HepG2 (cell line): ENCODE measurements at regions of chr9 and their contacts with region 1.

Region 1: GRCh38 chr9:101235105-101235866 is 149.5 kb downstream of the BAAT start:
- DNase-seq: peak; percentile 45
- ATAC-seq: peak; percentile 81
- H3K4me3 ChIP-seq: no peak overlapping the region
- H3K27ac ChIP-seq: no peak overlapping the region
- H3K4me1 ChIP-seq: peaks cover 30% of the 10 kb centered on the region
- H3K27me3 ChIP-seq: no peaks in the 10 kb centered on the region
- CTCF ChIP-seq: peak; percentile 68
- EP300 ChIP-seq: no peak
- POLR2A ChIP-seq: no peak
- RAD21 ChIP-seq: peak; percentile 47

Region 2: DNA sequence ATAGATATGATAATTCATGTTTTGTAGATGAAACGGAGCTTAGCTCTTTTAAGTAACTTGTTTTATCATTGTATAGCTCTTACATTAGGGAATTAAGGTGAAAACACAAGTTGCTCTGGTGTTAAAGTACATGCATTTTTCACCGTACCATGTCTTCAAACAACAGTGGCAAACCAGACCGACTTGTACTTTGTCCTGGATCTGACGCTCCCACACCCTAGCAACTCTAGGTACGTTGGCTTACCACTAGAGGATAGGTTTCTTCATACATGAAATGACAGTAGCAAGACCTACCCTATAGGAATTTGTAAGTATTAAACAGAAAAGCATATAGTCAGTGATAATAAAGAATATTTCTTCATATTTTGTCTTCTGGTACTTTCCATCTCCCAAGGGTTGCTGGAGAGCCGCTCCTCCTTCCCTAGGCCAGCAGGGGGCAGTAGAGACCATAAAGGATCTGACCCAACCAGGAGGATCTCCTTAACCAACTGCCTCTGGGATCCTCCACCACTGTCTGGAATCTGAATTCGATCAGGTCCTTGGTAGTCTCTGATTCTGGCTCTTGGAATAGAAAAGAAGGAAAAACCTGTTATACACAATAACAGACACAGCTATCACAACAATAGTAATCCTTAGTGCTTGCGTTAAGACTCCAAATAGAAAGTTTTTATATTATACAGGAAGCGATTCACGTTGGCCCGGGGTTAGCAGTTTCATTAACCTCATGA is 520.8 kb before region 1 on chr9:
- CTCF ChIA-PET with region 1: interaction called, 12 read pairs
- POLR2A ChIA-PET with region 1: no interaction called
- in situ Hi-C with region 1: loop called (anchors 25 kb)
- intact Hi-C with region 1: loop called (anchors 1 kb)
- DNase-seq: peak; percentile 48
- ATAC-seq: peak; percentile 91
- H3K4me3 ChIP-seq: no peak overlapping the region
- H3K27ac ChIP-seq: no peak overlapping the region
- H3K4me1 ChIP-seq: no peaks in the 10 kb centered on the region
- H3K27me3 ChIP-seq: no peaks in the 10 kb centered on the region
- CTCF ChIP-seq: peak; percentile 82
- EP300 ChIP-seq: no peak
- POLR2A ChIP-seq: no peak
- RAD21 ChIP-seq: peak; percentile 37; the same call in 1 of the 2 replicates

Region 3: GRCh38 chr9:101028346-101029314 is 206.7 kb before region 1 on chr9 and contains the start of gene PLPPR1:
- CTCF ChIA-PET with region 1: no interaction called
- POLR2A ChIA-PET with region 1: no interaction called
- in situ Hi-C with region 1: no loop called
- intact Hi-C with region 1: loop called (anchors 2 kb)
- DNase-seq: peak; percentile 89
- ATAC-seq: peak; percentile 91
- H3K4me3 ChIP-seq: peak within 1 kb of the TSS; percentile 89 to 92 (median 91)
- H3K27ac ChIP-seq: peak within 1 kb of the TSS; percentile 77
- H3K4me1 ChIP-seq: peaks cover 38% of the 10 kb centered on the region
- H3K27me3 ChIP-seq: peaks cover 3 to 8% of the 10 kb centered on the region in 2 experiments; a peak in 3 of 5 replicates
- CTCF ChIP-seq: peak; percentile 54
- EP300 ChIP-seq: peak in 1 of 2 experiments; percentile 38; a peak in 1 of 4 replicates
- POLR2A ChIP-seq: peak; percentile 76 to 89
- RAD21 ChIP-seq: peak; percentile 20; the same call in 1 of the 2 replicates
- total RNA-seq, gene PLPPR1: 16.0 and 16.4 TPM in 2 replicates

Region 4: DNA sequence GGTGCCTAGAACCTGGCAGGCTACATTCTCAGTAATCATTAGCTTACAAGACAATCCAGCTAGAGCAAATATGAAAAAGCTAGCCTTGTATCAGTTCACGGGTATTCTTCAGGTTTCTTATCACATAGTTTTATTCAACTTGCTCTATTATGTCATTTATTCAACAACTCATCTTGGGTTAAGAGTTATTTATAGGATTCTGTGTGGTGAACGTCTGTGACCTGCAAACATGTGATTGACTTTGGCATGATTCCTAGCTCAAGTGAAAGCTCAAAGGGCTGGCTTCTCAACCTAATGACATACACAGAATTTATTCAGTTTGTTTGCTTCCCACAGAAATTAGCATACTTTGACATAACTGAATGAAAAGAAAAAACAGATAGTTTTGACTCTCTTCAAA is 33.7 kb before region 1 on chr9:
- CTCF ChIA-PET with region 1: no interaction called
- POLR2A ChIA-PET with region 1: no interaction called
- in situ Hi-C with region 1: no loop called
- intact Hi-C with region 1: no loop called
- DNase-seq: peak; percentile 28
- ATAC-seq: no peak
- H3K4me3 ChIP-seq: no peak overlapping the region
- H3K27ac ChIP-seq: no peak overlapping the region
- H3K4me1 ChIP-seq: peaks cover 13% of the 10 kb centered on the region
- H3K27me3 ChIP-seq: no peaks in the 10 kb centered on the region
- CTCF ChIP-seq: no peak
- EP300 ChIP-seq: no peak
- POLR2A ChIP-seq: no peak
- RAD21 ChIP-seq: no peak

Region 5: GRCh38 chr9:101246691-101247090 is 11.4 kb after region 1 on chr9:
- CTCF ChIA-PET with region 1: no interaction called
- POLR2A ChIA-PET with region 1: no interaction called
- in situ Hi-C with region 1: no loop called
- intact Hi-C with region 1: no loop called
- DNase-seq: no peak
- ATAC-seq: no peak
- H3K4me3 ChIP-seq: no peak overlapping the region
- H3K27ac ChIP-seq: no peak overlapping the region
- H3K4me1 ChIP-seq: no peaks in the 10 kb centered on the region
- H3K27me3 ChIP-seq: no peaks in the 10 kb centered on the region
- CTCF ChIP-seq: no peak
- EP300 ChIP-seq: no peak
- POLR2A ChIP-seq: no peak
- RAD21 ChIP-seq: no peak